WTC11 (cell line): ENCODE measurements at regions of chr16 and their contacts with region 1.

Region 1: GRCh38 chr16:17194190-17194780 is 276.5 kb downstream of the XYLT1 start:
- DNase-seq: peak; percentile 87
- ATAC-seq: peak; percentile 97
- H3K4me3 Mint-ChIP-seq: no peak overlapping the region
- H3K27ac Mint-ChIP-seq: no peak overlapping the region
- H3K4me1 Mint-ChIP-seq: peaks cover 3% of the 10 kb centered on the region
- H3K27me3 Mint-ChIP-seq: no peaks in the 10 kb centered on the region
- CTCF ChIP-seq: peak; percentile 78

Region 2: DNA sequence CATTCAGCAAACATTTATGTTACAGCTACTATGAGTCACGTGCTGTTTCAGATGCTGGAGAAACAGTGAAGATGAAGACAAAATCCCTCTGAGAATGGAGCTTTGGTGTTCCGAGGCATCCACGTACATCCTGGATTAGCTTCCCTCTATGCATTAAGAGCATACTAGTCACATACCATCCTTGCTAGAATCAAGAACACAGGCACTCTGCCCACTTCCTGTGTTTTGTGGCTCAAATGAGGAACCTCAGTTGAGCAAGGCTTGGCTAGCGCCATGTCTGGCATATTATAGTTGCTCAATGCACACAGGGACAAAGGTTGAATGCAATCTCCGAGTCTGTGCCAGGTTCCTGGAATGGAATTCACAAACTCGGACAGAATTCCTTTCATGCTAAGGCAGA is 21.0 kb before region 1 on chr16:
- CTCF ChIA-PET with region 1: interaction called, 10 read pairs
- POLR2A ChIA-PET with region 1: interaction called, 9 read pairs
- DNase-seq: no peak
- ATAC-seq: no peak
- H3K4me3 Mint-ChIP-seq: no peak overlapping the region
- H3K27ac Mint-ChIP-seq: no peak overlapping the region
- H3K4me1 Mint-ChIP-seq: peaks cover 6% of the 10 kb centered on the region; the same call in 1 of the 2 replicates
- H3K27me3 Mint-ChIP-seq: no peaks in the 10 kb centered on the region
- CTCF ChIP-seq: no peak

Region 3: GRCh38 chr16:17205279-17206211 is 11.3 kb after region 1 on chr16:
- CTCF ChIA-PET with region 1: interaction called, 34 read pairs
- POLR2A ChIA-PET with region 1: no interaction called
- DNase-seq: peak; percentile 31
- ATAC-seq: peak; percentile 96
- H3K4me3 Mint-ChIP-seq: peak overlapping the region; percentile 22; the same call in 1 of the 2 replicates
- H3K27ac Mint-ChIP-seq: peak overlapping the region; percentile 92
- H3K4me1 Mint-ChIP-seq: peaks cover 26% of the 10 kb centered on the region
- H3K27me3 Mint-ChIP-seq: no peaks in the 10 kb centered on the region
- CTCF ChIP-seq: no peak

Region 4: GRCh38 chr16:17301593-17302135 is 107.4 kb after region 1 on chr16:
- CTCF ChIA-PET with region 1: no interaction called
- POLR2A ChIA-PET with region 1: no interaction called
- DNase-seq: no peak
- ATAC-seq: no peak
- H3K4me3 Mint-ChIP-seq: no peak overlapping the region
- H3K27ac Mint-ChIP-seq: peak overlapping the region; percentile 36; the same call in 1 of the 2 replicates
- H3K4me1 Mint-ChIP-seq: peaks cover 65% of the 10 kb centered on the region
- H3K27me3 Mint-ChIP-seq: no peaks in the 10 kb centered on the region
- CTCF ChIP-seq: no peak

Region 5: DNA sequence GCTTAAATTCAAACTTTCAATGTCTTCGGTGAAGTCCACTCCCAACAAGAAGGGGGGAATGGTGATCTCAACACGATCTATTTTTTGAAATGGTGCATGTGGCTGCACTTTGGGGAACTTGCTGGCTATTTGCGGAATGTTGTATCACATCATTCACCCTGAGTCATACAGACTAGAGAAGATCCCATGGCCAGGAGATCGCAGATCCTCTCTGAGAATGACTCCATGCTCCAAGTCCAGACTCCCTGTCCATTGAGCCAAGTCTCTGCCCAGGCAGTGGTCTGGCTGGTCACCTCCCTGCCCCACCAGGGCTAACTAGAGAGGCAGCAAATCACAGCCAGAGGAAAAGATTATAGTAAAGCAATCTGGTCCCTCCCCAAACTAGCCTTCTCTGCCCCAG is 155.9 kb after region 1 on chr16:
- CTCF ChIA-PET with region 1: no interaction called
- POLR2A ChIA-PET with region 1: no interaction called
- DNase-seq: no peak
- ATAC-seq: no peak
- H3K4me3 Mint-ChIP-seq: no peak overlapping the region
- H3K27ac Mint-ChIP-seq: no peak overlapping the region
- H3K4me1 Mint-ChIP-seq: no peaks in the 10 kb centered on the region
- H3K27me3 Mint-ChIP-seq: no peaks in the 10 kb centered on the region
- CTCF ChIP-seq: no peak